ENCODE measurements at regions of chr11 and their contacts with region 1.

Region 1: GRCh38 chr11:71114124-71114851 is 138.1 kb downstream of the SHANK2 start:
- DNase-seq: peak in 2 of 10 donors; percentile 18 to 54
- H3K4me3 ChIP-seq: peak overlapping the region in 21 of 59 donors; percentile 10 to 53 (median 24)
- H3K27ac ChIP-seq: no peak overlapping the region
- H3K27me3 ChIP-seq: peaks cover 0 to 12% (median 0%) of the 10 kb centered on the region in 45 donors
- CTCF ChIP-seq: peak in 51 of 56 donors; percentile 18 to 75 (median 43)

Region 2: DNA sequence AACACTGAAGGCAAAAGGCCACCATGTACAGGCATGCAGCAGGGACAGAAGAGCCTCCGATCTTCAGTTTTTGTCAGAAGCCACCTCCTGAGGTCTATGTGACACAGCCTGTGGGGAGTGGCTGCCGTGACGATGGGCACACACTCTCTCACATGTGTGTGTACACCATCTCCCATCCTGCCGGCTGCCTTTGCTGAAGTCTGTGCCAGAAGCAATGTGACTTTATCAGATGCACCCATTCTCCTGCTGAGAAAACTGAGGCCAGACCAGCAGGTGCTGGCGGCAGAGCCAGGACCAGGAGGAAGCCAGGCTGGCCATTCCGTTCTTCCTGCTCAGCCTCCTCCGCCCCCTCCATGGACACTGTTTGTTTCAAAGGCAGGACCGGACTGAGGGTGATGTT is 121.4 kb after region 1 on chr11:
- intact Hi-C with region 1: no loop called
- DNase-seq: peak in 4 of 10 donors; percentile 9 to 26 (median 20)
- H3K4me3 ChIP-seq: no peak overlapping the region
- H3K27ac ChIP-seq: no peak overlapping the region
- H3K27me3 ChIP-seq: peaks cover 0 to 29% (median 0%) of the 10 kb centered on the region in 45 donors
- CTCF ChIP-seq: no peak

Region 3: GRCh38 chr11:71251761-71252443 is 137.6 kb after region 1 on chr11:
- intact Hi-C with region 1: loop called (anchors 5 kb)
- DNase-seq: peak in 1 of 10 donors; percentile 54
- H3K4me3 ChIP-seq: peak overlapping the region; percentile 16 to 71 (median 52)
- H3K27ac ChIP-seq: peak overlapping the region in 1 of 59 donors; percentile 61
- H3K27me3 ChIP-seq: peaks cover 0 to 59% (median 29%) of the 10 kb centered on the region in 45 donors
- CTCF ChIP-seq: peak in 51 of 56 donors; percentile 13 to 71 (median 43)

Region 4: GRCh38 chr11:71372693-71373657 is 258.7 kb after region 1 on chr11:
- intact Hi-C with region 1: loop called (anchors 5 to 10 kb)
- DNase-seq: peak in 2 of 10 donors; percentile 27 to 44
- H3K4me3 ChIP-seq: no peak overlapping the region
- H3K27ac ChIP-seq: peak overlapping the region in 13 of 59 donors; percentile 4 to 63 (median 35)
- H3K27me3 ChIP-seq: peaks cover 0 to 2% (median 0%) of the 10 kb centered on the region in 45 donors
- CTCF ChIP-seq: peak in 54 of 56 donors; percentile 36 to 82 (median 60)

Region 5: DNA sequence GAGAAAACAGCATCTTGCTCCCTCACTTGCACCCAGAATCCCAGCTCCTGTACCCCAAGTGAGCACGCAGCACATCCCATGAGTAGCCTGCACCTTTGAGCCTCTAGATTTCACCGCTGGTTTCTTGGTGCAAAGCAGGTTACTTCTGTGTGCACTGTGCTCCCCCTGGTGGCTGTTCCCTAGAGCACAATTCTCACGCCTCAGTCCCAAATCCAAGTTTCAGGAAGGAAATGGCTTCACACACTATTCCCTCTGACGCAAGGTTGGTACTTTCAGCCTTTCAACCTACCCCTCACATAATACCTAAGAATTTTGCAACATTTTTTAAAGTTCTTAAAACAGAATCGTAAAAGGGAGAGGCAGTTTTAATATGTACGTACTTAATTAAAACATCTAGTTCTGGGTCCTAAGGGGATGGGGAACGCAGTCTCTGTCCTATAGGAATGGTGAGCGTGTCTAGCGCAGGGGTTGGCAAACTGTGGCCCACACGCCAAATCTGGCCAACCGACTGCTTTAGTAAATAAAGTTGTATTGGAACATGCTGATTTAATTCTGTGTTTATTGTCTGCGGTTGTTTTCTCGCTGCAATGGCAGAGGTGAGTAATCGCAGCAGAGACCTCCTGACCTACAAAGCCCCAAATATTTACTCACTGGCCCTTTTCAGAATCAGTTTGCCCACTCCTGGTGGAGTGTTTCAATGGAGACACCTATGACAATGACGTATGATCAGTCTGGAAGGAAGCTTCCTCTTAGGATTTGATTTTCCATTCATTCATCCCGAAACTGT is 306.4 kb after region 1 on chr11:
- intact Hi-C with region 1: loop called in 1 of 2 experiments (anchors 10 kb)
- DNase-seq: peak in 4 of 10 donors; percentile 11 to 65 (median 50)
- H3K4me3 ChIP-seq: no peak overlapping the region
- H3K27ac ChIP-seq: no peak overlapping the region
- H3K27me3 ChIP-seq: no peaks in the 10 kb centered on the region
- CTCF ChIP-seq: peak; percentile 35 to 84 (median 68)

Region 6: DNA sequence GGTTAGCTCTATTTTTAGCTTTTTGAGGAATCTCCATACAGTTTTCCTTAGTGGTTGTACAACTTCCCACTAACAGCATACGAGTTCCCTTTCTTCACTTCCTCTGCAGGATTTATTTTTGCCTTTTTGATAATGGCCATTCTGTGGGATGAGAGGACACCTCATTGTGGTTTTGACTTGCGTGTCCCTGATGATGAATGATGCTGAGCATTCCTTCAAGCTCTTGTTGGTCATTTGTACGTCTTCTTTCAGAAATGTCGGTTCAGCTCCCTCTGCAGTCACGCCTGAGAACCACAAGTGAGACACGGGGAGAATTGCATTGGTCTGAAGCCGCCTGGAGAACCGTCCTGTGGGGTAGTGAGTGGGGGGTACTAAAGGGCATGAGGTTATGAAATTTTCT is 449.1 kb after region 1 on chr11:
- intact Hi-C with region 1: loop called in 1 of 2 experiments (anchors 10 kb)
- DNase-seq: peak in 2 of 10 donors; percentile 14 to 41
- H3K4me3 ChIP-seq: no peak overlapping the region
- H3K27ac ChIP-seq: no peak overlapping the region
- H3K27me3 ChIP-seq: peaks cover 0 to 11% (median 0%) of the 10 kb centered on the region in 45 donors
- CTCF ChIP-seq: peak in 42 of 56 donors; percentile 12 to 59 (median 38)